RWPE1 (cell line): ENCODE measurements at regions of chr5 and their contacts with region 1.

Region 1: GRCh38 chr5:75199946-75200345 is 36.7 kb downstream of the ANKRD31 start:
- DNase-seq: no peak
- H3K27ac ChIP-seq: no peak overlapping the region
- CTCF ChIP-seq: no peak

Region 2: GRCh38 chr5:75059912-75060545 is 139.9 kb before region 1 on chr5:
- CTCF ChIA-PET with region 1: no interaction called
- POLR2A ChIA-PET with region 1: no interaction called
- DNase-seq: no peak
- H3K27ac ChIP-seq: no peak overlapping the region
- CTCF ChIP-seq: no peak

Region 3: GRCh38 chr5:75236322-75237316 is 36.7 kb after region 1 on chr5 and contains the start of gene ANKRD31:
- CTCF ChIA-PET with region 1: interaction called, 4 read pairs
- POLR2A ChIA-PET with region 1: interaction called, 14 read pairs
- DNase-seq: peak; percentile 92
- H3K27ac ChIP-seq: peak within 1 kb of the TSS; percentile 64
- CTCF ChIP-seq: peak; percentile 99